ENCODE measurements at regions of chr14 and their contacts with region 1.

Region 1: GRCh38 chr14:71753126-71753830 is 179.0 kb upstream of the RGS6 start:
- DNase-seq: peak; percentile 76
- H3K4me3 Mint-ChIP-seq: no peak overlapping the region
- H3K27ac Mint-ChIP-seq: no peak overlapping the region
- H3K4me1 Mint-ChIP-seq: peaks cover 17% of the 10 kb centered on the region
- H3K27me3 Mint-ChIP-seq: peaks cover 2% of the 10 kb centered on the region

Region 2: DNA sequence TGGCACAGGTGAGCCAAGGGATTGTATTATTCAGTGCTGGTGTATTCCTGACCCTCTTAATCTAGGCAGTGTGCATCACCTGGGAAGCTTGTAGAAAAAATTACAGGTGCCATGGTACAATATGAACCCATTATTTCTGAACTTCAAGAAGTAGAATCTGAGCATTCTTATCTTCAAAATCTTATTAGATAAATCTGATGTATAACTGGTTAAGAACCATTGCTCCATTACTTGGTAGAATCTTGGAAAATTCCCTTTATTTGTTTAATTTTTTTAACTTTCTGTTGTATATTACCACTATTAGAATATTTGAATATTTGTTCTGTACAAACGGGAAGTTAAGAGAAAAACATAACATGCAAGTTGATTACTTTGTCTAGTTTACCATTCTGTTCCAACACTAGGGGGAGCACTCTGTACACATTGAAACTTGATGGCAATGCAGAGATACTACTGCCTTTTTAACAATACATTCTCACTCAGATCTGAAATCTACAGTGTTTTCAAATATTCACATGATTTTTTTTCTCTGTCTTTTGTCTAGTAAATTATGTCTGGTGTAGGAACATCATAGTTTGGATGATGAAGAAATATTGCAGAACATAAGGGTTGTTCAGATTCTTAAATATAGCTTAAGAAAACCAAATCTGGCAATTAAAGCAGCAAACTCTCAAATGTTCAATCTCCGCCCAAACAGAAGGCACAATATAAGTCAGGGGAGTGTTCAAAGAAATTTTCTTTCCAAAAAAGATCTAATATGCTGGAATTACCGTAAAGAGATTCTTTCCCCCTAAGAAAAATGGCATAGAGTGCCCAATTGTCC is 649.4 kb before region 1 on chr14:
- CTCF ChIA-PET with region 1: interaction called, 26 read pairs
- POLR2A ChIA-PET with region 1: no interaction called
- DNase-seq: no peak
- H3K4me3 Mint-ChIP-seq: no peak overlapping the region
- H3K27ac Mint-ChIP-seq: no peak overlapping the region
- H3K4me1 Mint-ChIP-seq: peaks cover 5% of the 10 kb centered on the region
- H3K27me3 Mint-ChIP-seq: no peaks in the 10 kb centered on the region

Region 3: GRCh38 chr14:71138448-71139293 is 614.6 kb before region 1 on chr14:
- CTCF ChIA-PET with region 1: interaction called, 63 read pairs
- POLR2A ChIA-PET with region 1: no interaction called
- DNase-seq: peak; percentile 63
- H3K4me3 Mint-ChIP-seq: no peak overlapping the region
- H3K27ac Mint-ChIP-seq: no peak overlapping the region
- H3K4me1 Mint-ChIP-seq: peaks cover 47% of the 10 kb centered on the region
- H3K27me3 Mint-ChIP-seq: no peaks in the 10 kb centered on the region

Region 4: DNA sequence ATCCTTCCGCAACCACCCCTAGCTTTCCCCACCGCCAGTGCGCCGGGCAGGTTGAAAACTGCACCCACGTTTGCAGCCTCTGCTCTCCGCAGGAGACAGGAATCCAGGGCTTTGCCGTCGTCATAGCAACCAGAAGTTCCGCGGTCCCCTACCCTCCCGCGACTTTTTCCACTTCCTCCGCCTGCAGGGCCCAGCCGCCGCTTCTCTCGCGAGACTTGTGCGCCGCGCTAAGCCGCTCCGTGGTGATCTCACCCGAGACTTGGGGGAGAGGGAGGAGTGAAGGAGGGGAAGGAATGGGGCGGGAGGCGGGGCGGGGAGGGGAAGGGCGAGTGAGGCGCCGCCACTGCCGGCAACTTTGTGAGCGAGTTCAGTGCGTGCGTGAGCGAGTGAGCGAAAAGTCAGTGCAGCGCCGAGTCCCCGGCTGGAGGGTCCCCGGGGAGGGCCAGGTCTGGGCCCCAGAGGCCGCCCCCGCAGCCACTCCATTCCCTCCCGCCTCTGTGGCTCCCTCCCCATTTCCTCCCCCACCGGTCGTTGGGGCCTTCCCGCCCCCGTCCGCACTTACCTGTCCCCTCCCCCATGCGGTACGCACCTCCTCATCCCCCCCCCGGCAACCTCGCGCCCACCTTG is 433.1 kb before region 1 on chr14:
- CTCF ChIA-PET with region 1: interaction called, 10 read pairs
- POLR2A ChIA-PET with region 1: interaction called, 5 read pairs
- DNase-seq: peak; percentile 99
- H3K4me3 Mint-ChIP-seq: peak within 1 kb of the TSS; percentile 87
- H3K27ac Mint-ChIP-seq: peak within 1 kb of the TSS; percentile 82
- H3K4me1 Mint-ChIP-seq: peaks cover 45% of the 10 kb centered on the region
- H3K27me3 Mint-ChIP-seq: peaks cover 2% of the 10 kb centered on the region

Region 5: GRCh38 chr14:71403656-71404055 is 349.6 kb before region 1 on chr14:
- CTCF ChIA-PET with region 1: interaction called, 11 read pairs
- POLR2A ChIA-PET with region 1: interaction called, 3 read pairs
- DNase-seq: peak; percentile 45
- H3K4me3 Mint-ChIP-seq: no peak overlapping the region
- H3K27ac Mint-ChIP-seq: no peak overlapping the region
- H3K4me1 Mint-ChIP-seq: peaks cover 35% of the 10 kb centered on the region
- H3K27me3 Mint-ChIP-seq: no peaks in the 10 kb centered on the region

Region 6: DNA sequence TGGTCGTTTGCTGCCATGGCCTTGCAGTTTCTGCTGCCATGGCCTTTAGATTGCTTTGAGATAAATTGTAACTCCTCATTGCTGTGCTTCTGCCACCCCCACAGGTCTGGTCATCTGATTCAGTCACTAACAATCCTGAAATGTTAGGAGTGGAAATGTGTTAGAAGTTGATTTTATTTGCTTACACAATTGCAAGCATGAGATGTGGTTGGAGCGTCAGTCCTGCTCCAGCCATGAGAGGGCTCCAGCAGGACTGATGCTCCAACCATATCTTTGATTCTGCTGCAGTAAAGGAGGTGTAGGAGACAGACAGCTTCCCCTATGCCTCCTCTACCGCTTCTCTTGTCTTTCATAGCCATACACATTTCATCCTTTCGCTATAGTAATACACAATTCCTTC is 47.8 kb before region 1 on chr14:
- CTCF ChIA-PET with region 1: no interaction called
- POLR2A ChIA-PET with region 1: no interaction called
- DNase-seq: no peak
- H3K4me3 Mint-ChIP-seq: no peak overlapping the region
- H3K27ac Mint-ChIP-seq: no peak overlapping the region
- H3K4me1 Mint-ChIP-seq: peaks cover 27% of the 10 kb centered on the region
- H3K27me3 Mint-ChIP-seq: no peaks in the 10 kb centered on the region

Region 7: GRCh38 chr14:71739273-71739937 is 13.9 kb before region 1 on chr14:
- CTCF ChIA-PET with region 1: interaction called, 12 read pairs
- POLR2A ChIA-PET with region 1: no interaction called
- DNase-seq: no peak
- H3K4me3 Mint-ChIP-seq: no peak overlapping the region
- H3K27ac Mint-ChIP-seq: no peak overlapping the region
- H3K4me1 Mint-ChIP-seq: peaks cover 5% of the 10 kb centered on the region
- H3K27me3 Mint-ChIP-seq: no peaks in the 10 kb centered on the region

Region 8: GRCh38 chr14:71764701-71765382 is 11.6 kb after region 1 on chr14:
- CTCF ChIA-PET with region 1: interaction called, 10 read pairs
- POLR2A ChIA-PET with region 1: no interaction called
- DNase-seq: no peak
- H3K4me3 Mint-ChIP-seq: no peak overlapping the region
- H3K27ac Mint-ChIP-seq: no peak overlapping the region
- H3K4me1 Mint-ChIP-seq: no peaks in the 10 kb centered on the region
- H3K27me3 Mint-ChIP-seq: peaks cover 45% of the 10 kb centered on the region

Measured in activated CD4-positive, alpha-beta memory T cell treated with anti-CD3 and anti-CD28 coated beads, Interleukin-2, amount 10 ng/mL, durations not matched to agents 7 days and 5 days (primary cell).